ENCODE measurements at regions of chr6 and their contacts with region 1.

Region 1: DNA sequence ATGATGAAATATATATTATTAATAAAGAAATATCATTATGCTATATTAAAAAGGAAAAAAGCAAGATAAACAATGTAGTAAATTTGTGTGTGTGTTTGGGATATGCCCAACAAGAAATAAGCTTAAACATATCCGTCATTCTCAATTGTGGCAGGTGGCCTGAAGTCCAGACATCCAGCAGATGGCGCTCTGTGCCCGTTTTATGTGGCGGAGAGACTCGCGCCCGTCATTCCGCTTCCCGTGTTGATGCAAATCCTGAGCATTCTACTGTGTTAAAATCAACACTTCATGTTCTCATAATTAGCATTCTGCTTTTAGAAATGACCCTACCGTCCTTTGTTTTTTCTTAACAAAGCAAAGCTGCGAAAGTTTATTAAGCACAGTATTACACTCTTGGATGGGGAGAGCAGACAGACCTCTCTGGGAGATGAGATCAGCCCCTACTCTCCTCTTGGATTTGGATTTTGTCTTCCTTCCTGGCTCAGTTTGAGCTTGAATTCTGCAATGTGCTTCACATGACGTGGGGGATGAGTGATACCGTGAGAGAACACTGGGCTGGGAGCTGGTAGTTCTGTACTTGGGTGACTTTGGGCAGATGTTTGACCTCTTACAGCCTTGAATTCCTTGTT is 125.8 kb downstream of the MCHR2 start:
- H3K4me3 ChIP-seq: no peak overlapping the region
- H3K27ac ChIP-seq: no peak overlapping the region
- H3K4me1 ChIP-seq: no peaks in the 10 kb centered on the region
- CTCF ChIP-seq: peak; percentile 77

Region 2: DNA sequence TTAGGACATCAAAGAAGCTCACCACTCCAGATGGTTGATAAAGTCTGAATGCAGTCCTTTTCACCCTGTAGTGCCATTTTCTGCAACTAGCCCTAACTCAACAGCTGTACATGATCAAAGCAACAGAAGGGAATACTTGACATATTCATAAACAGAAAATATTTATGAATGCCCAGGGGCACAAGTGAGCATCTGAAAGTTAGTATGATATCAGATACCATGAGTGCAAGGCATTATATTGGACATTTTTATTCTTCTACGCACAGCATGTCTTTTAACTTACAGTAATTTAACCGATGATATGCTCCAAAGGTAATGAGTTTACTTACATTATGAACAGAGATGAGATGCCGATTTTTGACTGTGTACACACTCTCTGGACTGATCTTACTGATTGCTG is 16.2 kb before region 1 on chr6:
- CTCF ChIA-PET with region 1: interaction called, 13 read pairs
- POLR2A ChIA-PET with region 1: no interaction called
- H3K4me3 ChIP-seq: no peak overlapping the region
- H3K27ac ChIP-seq: no peak overlapping the region
- H3K4me1 ChIP-seq: no peaks in the 10 kb centered on the region
- CTCF ChIP-seq: no peak

Region 3: GRCh38 chr6:99905209-99906106 is 37.3 kb after region 1 on chr6:
- CTCF ChIA-PET with region 1: interaction called, 85 read pairs
- POLR2A ChIA-PET with region 1: no interaction called
- H3K4me3 ChIP-seq: no peak overlapping the region
- H3K27ac ChIP-seq: no peak overlapping the region
- H3K4me1 ChIP-seq: no peaks in the 10 kb centered on the region
- CTCF ChIP-seq: 0 out of 2 replicates have a peak, but pooled peaks have one; percentile 16

Region 4: DNA sequence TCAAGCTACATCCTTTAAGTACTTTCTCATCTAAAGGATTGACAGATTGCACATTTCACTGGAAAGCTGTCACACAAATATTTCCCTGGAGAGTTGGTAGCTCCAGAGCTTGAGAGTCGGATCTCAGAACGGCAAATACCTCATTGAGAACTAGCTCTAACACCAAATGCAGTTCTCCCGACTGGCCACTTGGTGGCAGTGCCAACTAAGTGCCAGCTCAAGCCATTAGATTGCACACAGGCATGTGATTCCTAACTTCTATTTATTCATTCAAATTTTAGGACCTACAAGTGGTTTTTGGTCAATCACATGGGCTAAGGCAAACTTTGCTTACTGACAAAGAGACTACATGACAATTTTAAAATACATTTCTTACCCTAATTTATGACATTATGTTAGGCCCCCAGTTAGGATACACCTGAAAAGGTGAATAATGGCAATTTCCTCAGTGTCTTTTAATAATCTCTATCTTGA is 133.8 kb after region 1 on chr6:
- CTCF ChIA-PET with region 1: interaction called, 28 read pairs
- POLR2A ChIA-PET with region 1: no interaction called
- H3K4me3 ChIP-seq: no peak overlapping the region
- H3K27ac ChIP-seq: no peak overlapping the region
- H3K4me1 ChIP-seq: no peaks in the 10 kb centered on the region
- CTCF ChIP-seq: 0 out of 2 replicates have a peak, but pooled peaks have one; percentile 36

Region 5: GRCh38 chr6:100093405-100093804 is 225.2 kb after region 1 on chr6:
- CTCF ChIA-PET with region 1: interaction called, 142 read pairs
- POLR2A ChIA-PET with region 1: no interaction called
- H3K4me3 ChIP-seq: no peak overlapping the region
- H3K27ac ChIP-seq: no peak overlapping the region
- H3K4me1 ChIP-seq: no peaks in the 10 kb centered on the region
- CTCF ChIP-seq: no peak

Region 6: GRCh38 chr6:100105138-100105753 is 237.1 kb after region 1 on chr6:
- CTCF ChIA-PET with region 1: interaction called, 142 read pairs
- POLR2A ChIA-PET with region 1: no interaction called
- H3K4me3 ChIP-seq: no peak overlapping the region
- H3K27ac ChIP-seq: no peak overlapping the region
- H3K4me1 ChIP-seq: no peaks in the 10 kb centered on the region
- CTCF ChIP-seq: no peak

Region 7: GRCh38 chr6:100212131-100212530 is 343.9 kb after region 1 on chr6:
- CTCF ChIA-PET with region 1: no interaction called
- POLR2A ChIA-PET with region 1: no interaction called
- H3K4me3 ChIP-seq: no peak overlapping the region
- H3K27ac ChIP-seq: no peak overlapping the region
- H3K4me1 ChIP-seq: no peaks in the 10 kb centered on the region
- CTCF ChIP-seq: no peak

Region 8: DNA sequence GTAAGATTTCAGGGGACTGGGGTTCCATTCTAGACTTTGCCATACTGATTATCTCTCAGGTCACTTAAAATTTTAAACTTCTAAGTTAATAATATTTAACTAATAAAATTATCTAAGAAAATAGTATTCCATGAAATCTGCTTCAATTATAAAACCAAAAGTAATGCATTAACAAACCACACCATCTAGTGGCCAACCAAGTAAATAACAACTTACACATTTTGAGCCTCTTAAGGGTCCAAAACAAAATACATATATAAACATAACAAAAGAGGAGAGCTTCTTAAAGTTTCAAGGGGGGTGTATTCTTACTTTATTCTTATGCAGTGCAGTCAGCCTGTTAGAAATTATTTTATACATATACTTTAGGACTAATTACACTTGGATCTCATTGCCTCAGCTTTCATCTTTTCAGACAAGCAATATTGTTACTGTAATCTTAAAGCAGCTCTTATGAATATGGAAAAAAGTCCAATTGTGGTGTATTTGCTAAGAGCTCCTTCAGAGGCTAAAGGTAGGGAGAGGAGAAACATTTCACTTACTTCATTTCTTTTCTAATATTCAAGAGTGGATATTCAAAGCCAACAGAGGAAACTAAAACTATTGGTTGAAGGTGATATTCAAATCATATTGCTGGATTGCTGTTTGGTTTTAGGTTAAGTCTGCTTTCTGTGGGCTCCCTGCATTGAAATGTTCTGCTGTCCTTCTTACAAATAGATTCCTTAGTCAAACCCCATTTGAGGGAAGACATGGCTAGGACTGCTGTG is 796.3 kb after region 1 on chr6:
- CTCF ChIA-PET with region 1: interaction called, 19 read pairs
- POLR2A ChIA-PET with region 1: no interaction called
- H3K4me3 ChIP-seq: no peak overlapping the region
- H3K27ac ChIP-seq: no peak overlapping the region
- H3K4me1 ChIP-seq: no peaks in the 10 kb centered on the region
- CTCF ChIP-seq: no peak